Left cardiac atrium (tissue), 4 donors: ENCODE measurements at regions of chr3 and their contacts with region 1.

Region 1: DNA sequence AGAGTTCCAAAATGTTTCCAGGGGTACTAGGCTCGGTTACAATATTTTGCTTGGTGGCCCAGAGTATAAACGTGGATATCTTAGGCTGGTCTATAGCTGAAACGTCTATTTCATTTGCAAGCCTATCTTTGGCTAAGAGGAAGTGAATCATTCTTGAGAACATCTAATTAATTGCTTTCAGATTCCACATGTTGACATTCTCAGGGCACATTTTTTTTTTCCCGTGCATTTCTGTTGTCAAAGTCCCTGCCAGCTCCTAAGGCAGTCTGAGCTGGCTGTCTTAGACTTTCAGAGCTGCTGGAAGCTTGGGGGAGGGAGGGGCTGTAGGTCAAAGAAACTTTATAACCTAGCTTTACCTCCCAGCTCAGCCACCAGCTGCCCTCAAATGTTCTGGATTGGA is 23.2 kb upstream of the LAMP3 start:
- DNase-seq: no peak
- ATAC-seq: no peak

Region 2: GRCh38 chr3:183385698-183386613 is 200.3 kb after region 1 on chr3:
- intact Hi-C with region 1: loop called (anchors 2 kb)
- DNase-seq: peak; percentile 34
- ATAC-seq: peak; percentile 84 to 86